ENCODE measurements at regions of chr11 and their contacts with region 1.

Region 1: DNA sequence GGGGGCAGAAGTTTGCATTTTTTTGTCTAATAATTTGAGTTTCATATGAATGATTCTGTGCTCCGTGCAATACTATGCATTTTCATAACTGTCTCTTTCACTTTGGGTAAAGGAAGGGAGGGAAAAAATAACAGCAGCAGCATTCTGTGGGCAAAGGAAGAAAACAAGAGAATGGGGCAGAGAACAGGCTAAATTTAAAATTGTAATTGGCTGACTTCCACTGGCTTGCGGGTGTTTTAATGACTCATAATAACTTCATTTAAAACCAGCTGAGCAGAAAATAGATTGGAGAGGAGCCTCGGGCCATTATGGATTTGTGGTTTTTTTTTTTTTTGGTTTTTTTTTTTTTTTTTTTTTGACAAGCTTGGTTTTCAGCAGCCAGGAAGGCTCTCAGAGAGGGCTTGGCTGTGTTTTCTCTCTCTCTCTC is 107.4 kb downstream of the ZBTB16 start:
- DNase-seq: peak; percentile 92
- H3K4me3 Mint-ChIP-seq: peak overlapping the region; percentile 58
- H3K27ac Mint-ChIP-seq: peak overlapping the region; percentile 99
- H3K4me1 Mint-ChIP-seq: peaks cover 87% of the 10 kb centered on the region
- H3K27me3 Mint-ChIP-seq: no peaks in the 10 kb centered on the region
- CTCF ChIP-seq: no peak

Region 2: DNA sequence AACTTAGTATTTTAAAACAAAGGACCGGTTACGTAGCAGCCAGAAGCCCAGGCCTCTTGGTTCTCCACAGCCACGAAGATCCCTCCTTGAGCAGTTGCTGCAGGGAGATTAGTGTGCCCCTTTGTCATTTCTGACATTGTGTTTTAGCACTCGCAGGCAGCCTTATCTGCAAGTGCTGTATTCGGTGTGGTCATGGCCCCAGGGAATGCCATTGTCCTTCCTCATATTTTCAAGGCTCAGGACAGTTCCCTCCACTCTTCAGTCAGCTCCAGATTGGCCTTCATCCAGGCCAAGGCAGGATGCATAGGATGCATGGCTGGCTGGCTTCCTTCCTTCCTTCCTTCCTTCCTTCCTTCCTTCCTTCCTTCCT is 18.9 kb before region 1 on chr11:
- CTCF ChIA-PET with region 1: interaction called, 4 read pairs
- POLR2A ChIA-PET with region 1: interaction called, 48 read pairs
- intact Hi-C with region 1: no loop called
- DNase-seq: no peak
- H3K4me3 Mint-ChIP-seq: no peak overlapping the region
- H3K27ac Mint-ChIP-seq: peak overlapping the region; percentile 99
- H3K4me1 Mint-ChIP-seq: peaks cover 72% of the 10 kb centered on the region
- H3K27me3 Mint-ChIP-seq: no peaks in the 10 kb centered on the region
- CTCF ChIP-seq: no peak

Region 3: DNA sequence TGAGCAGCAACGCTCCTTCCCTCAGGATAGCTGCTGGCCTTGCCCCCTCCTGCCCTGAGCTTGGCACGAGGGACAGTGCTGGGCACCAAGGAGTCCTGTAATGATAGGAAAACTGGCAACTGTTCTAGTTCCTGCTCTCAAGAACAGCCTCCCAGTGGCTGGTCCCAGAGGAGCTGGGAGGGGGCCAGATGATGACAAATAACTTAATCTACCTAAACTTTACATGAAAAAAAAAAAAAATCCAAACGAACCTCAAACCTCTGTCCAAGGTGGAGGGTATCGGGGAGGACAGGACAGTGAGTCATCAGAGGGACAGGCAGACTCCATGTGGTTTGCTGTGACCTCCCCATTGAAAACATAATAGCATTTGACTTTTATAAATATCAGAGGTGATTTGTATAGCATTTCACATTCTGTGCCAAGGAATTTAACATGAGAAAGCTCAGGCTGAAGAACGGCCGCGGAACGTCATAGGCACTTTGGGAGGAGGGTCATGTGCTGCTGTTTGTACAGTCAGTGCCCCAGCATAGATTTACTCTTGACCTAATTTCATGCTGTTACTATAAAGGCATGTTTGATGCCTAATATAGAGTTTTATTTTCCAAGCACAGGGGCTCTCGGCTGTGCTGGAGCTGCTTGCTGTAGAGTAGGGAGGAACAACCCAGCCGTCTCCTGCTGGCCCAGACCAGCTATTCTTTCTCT is 31.0 kb after region 1 on chr11:
- CTCF ChIA-PET with region 1: interaction called, 3 read pairs
- POLR2A ChIA-PET with region 1: interaction called, 1,399 read pairs
- intact Hi-C with region 1: loop called (anchors 1 kb)
- DNase-seq: peak; percentile 95
- H3K4me3 Mint-ChIP-seq: peak overlapping the region; percentile 1
- H3K27ac Mint-ChIP-seq: peak overlapping the region; percentile 97
- H3K4me1 Mint-ChIP-seq: peaks cover 66% of the 10 kb centered on the region
- H3K27me3 Mint-ChIP-seq: no peaks in the 10 kb centered on the region
- CTCF ChIP-seq: no peak

Measured in MCF 10A (cell line).